Naive thymus-derived CD4-positive, alpha-beta T cell (primary cell): ENCODE measurements at regions of chr1 and their contacts with region 1.

Region 1: DNA sequence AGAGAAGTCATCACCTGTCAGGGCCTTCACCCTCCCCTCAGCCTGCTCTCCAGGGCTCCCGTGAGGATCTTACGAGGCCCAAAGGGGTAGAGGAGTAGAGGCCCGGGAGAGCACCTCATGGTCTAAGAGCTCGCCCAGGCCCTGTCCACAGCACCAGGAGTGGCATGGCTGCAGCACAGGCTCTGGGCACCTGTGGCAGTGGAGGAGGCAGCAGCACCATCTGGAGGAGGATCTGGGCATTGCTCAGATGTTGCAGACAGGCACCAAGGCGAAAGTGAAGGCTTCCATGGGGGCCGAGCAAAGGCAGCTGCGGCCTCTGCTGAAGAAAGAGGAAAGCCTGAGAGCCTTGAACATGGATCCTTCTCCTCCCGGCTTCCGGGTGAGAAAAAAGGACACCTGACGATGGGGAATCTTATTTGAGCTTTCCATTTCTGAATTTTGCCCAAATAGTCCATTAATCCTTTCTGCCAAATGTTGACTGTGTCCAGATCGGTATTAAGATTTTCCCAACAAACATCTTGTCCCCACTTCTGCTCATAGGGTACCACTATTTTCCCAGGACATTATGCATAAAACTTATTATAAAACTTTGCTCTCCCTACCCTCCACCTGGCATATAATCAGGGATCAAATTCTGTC is 604.7 kb downstream of the PTPRC start:
- DNase-seq: peak; percentile 19 to 75 (median 41)
- ATAC-seq: peak; percentile 94
- H3K4me3 ChIP-seq: no peak overlapping the region
- H3K4me3 Mint-ChIP-seq: no peak overlapping the region
- H3K27ac ChIP-seq: no peak overlapping the region
- H3K27ac Mint-ChIP-seq: peak overlapping the region in 1 of 9 donors; percentile 26
- H3K4me1 ChIP-seq: no peaks in the 10 kb centered on the region
- H3K4me1 Mint-ChIP-seq: peaks cover 0 to 17% (median 0%) of the 10 kb centered on the region in 7 donors
- H3K27me3 ChIP-seq: no peaks in the 10 kb centered on the region
- H3K27me3 Mint-ChIP-seq: peaks cover 6 to 33% (median 7%) of the 10 kb centered on the region in 5 donors

Region 2: DNA sequence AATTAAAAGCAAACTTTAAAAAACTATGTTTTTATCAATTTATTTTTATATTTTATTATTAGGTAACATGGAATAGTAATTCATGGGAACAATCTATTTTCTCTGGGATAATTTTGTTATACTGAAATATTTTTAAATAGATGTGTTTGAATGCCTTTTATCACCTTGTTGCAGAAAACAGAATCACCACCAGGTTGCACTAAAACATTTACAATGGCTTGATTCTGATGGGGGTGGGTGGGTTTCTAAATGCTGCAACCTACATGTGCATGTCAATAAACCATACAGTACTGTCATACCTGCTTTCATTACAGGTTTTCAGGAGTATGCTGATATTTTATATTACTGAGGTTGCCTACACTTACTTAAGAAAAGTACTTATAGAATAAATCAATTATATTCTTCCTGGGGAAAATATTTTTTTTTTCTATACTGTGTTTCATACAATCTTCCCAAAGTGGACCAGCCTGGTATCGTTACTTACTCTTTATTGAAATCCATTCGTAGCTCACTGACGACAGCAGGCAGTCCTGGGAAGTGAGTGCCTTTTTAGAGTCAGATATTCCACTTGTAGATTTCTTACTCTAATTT is 471.9 kb before region 1 on chr1:
- CTCF ChIA-PET with region 1: no interaction called
- POLR2A ChIA-PET with region 1: no interaction called
- intact Hi-C with region 1: loop called (anchors 1 kb)
- DNase-seq: no peak
- ATAC-seq: peak; percentile 40
- H3K4me3 ChIP-seq: no peak overlapping the region
- H3K4me3 Mint-ChIP-seq: no peak overlapping the region
- H3K27ac ChIP-seq: no peak overlapping the region
- H3K27ac Mint-ChIP-seq: no peak overlapping the region
- H3K4me1 ChIP-seq: no peaks in the 10 kb centered on the region
- H3K4me1 Mint-ChIP-seq: peaks cover 0 to 12% (median 3%) of the 10 kb centered on the region in 7 donors
- H3K27me3 ChIP-seq: no peaks in the 10 kb centered on the region
- H3K27me3 Mint-ChIP-seq: peaks cover 0 to 3% (median 0%) of the 10 kb centered on the region in 5 donors

Region 3: DNA sequence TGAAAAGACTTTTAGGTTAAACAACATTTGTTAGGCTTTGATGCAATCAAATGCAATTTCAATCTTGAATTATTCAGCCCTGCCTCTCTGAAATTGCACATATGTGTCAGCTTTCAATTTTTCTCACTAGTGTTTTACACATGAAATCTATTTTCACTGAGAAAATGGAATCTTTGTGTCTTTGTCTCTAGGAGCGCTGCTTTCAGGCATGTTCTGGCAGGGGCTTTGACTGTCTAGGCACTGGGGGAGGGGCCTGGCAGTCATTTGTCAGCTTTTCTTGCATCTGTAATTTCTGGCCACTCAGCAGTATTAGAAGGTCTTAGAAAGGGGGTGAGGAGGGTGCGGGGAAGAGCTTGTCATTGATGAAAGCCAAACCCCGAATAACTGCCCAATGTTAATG is 340.3 kb before region 1 on chr1:
- CTCF ChIA-PET with region 1: no interaction called
- POLR2A ChIA-PET with region 1: no interaction called
- intact Hi-C with region 1: loop called in 1 of 2 experiments (anchors 5 kb)
- DNase-seq: no peak
- ATAC-seq: no peak
- H3K4me3 ChIP-seq: no peak overlapping the region
- H3K4me3 Mint-ChIP-seq: no peak overlapping the region
- H3K27ac ChIP-seq: no peak overlapping the region
- H3K27ac Mint-ChIP-seq: peak overlapping the region in 1 of 9 donors; percentile 12
- H3K4me1 ChIP-seq: peaks cover 0 to 12% of the 10 kb centered on the region in 2 donors
- H3K4me1 Mint-ChIP-seq: peaks cover 9 to 59% (median 24%) of the 10 kb centered on the region in 7 donors
- H3K27me3 ChIP-seq: no peaks in the 10 kb centered on the region
- H3K27me3 Mint-ChIP-seq: no peaks in the 10 kb centered on the region

Region 4: GRCh38 chr1:199113265-199113869 is 130.2 kb before region 1 on chr1:
- CTCF ChIA-PET with region 1: interaction called, 7 read pairs
- POLR2A ChIA-PET with region 1: no interaction called
- intact Hi-C with region 1: loop called in 1 of 2 experiments (anchors 5 kb)
- DNase-seq: peak; percentile 26 to 64 (median 44)
- ATAC-seq: peak; percentile 80
- H3K4me3 ChIP-seq: no peak overlapping the region
- H3K4me3 Mint-ChIP-seq: peak overlapping the region in 1 of 10 donors; percentile 7
- H3K27ac ChIP-seq: no peak overlapping the region
- H3K27ac Mint-ChIP-seq: peak overlapping the region in 1 of 9 donors; percentile 4
- H3K4me1 ChIP-seq: no peaks in the 10 kb centered on the region
- H3K4me1 Mint-ChIP-seq: peaks cover 0 to 22% (median 0%) of the 10 kb centered on the region in 7 donors
- H3K27me3 ChIP-seq: no peaks in the 10 kb centered on the region
- H3K27me3 Mint-ChIP-seq: no peaks in the 10 kb centered on the region

Region 5: DNA sequence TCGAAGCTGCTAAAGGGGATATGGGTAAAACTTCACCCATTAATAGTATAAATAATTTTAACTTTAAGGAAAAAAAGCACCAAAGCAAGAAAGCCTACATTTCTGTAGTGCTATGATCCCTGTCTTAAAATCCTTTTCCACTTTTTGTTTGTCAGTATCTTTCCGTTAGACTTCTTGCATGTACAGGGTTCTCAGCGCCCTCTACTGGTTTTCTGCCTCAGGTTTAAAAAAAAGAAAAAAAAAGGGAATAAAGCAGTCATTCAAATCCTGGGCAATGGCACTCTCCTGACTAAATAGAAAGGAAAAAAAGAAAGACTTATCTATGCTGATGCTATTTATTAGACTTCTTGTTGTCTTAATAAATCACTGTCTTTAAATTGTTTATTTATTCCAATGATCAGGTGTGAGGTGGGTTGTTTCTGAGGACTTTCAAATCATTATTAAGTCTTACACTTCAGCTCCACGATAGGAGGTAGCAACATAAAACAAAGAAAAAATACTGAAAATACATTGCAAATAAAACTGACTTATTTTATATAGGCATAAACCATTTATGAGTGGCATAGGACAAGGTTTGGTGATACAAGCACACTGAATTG is 308.5 kb after region 1 on chr1:
- CTCF ChIA-PET with region 1: no interaction called
- POLR2A ChIA-PET with region 1: no interaction called
- intact Hi-C with region 1: loop called in 1 of 2 experiments (anchors 10 kb)
- DNase-seq: peak in 4 of 9 donors; percentile 11 to 34 (median 20)
- ATAC-seq: no peak
- H3K4me3 ChIP-seq: no peak overlapping the region
- H3K4me3 Mint-ChIP-seq: no peak overlapping the region
- H3K27ac ChIP-seq: no peak overlapping the region
- H3K27ac Mint-ChIP-seq: no peak overlapping the region
- H3K4me1 ChIP-seq: no peaks in the 10 kb centered on the region
- H3K4me1 Mint-ChIP-seq: peaks cover 0 to 1% (median 0%) of the 10 kb centered on the region in 7 donors
- H3K27me3 ChIP-seq: no peaks in the 10 kb centered on the region
- H3K27me3 Mint-ChIP-seq: peaks cover 9 to 22% (median 15%) of the 10 kb centered on the region in 5 donors